PC-3 (cell line): ENCODE measurements at regions of chr19 and their contacts with region 1.

Region 1: DNA sequence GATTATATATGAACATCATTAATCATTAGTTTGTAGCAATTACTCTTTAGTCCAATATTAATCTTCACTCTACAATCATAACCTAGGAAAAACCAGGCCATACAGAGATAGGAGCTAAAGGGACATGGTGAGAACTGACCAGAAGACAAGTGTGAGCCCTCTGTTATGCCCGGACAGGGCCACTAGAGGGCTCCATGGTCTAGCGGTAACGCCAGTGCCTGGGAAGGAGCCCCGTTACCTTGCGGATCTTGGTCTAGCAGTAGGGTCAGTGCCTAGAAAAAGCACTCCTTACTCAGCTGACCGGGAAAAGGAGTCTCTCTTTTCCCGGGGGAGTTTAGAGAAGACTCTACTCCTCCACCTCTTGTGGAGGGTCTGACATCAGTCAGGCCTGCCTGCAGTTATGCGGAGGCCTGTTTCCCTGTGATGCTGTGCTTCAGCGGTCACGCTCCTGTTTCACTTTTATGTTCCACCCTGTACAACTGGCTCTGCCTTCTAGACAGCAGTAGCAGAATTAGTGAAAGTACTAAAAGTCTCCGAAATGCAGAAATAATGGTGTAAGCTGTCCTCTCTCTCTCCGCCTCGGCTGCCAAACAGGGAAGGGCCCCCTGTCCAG is 13.8 kb downstream of the OR7D4 start:
- DNase-seq: peak; percentile 89
- ATAC-seq: peak; percentile 94
- H3K4me3 ChIP-seq: peak overlapping the region; percentile 54
- H3K27ac ChIP-seq: no peak overlapping the region
- H3K4me1 ChIP-seq: no peaks in the 10 kb centered on the region
- H3K27me3 ChIP-seq: no peaks in the 10 kb centered on the region
- CTCF ChIP-seq: peak; percentile 84

Region 2: DNA sequence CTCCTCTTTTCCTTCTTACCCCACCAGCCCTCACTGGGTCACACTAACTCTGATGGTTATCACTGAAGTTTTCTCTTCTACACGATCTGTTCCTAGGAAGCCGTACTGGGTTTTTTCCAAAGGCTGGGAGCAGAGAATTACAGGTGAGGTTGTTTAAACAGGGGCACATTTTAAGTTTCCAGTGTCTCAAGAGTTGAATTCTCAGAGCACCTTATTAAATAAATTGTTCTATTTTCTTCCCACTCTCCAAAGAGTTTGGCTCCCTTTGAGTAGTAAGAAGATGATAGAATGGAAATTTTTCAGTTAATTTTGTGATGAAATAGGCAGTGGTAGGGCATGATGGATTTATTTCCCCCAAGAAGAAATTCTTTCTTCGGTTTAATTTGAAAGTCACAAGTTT is 13.9 kb after region 1 on chr19 and contains the start of gene OR7D4:
- CTCF ChIA-PET with region 1: no interaction called
- POLR2A ChIA-PET with region 1: no interaction called
- intact Hi-C with region 1: no loop called
- DNase-seq: no peak
- ATAC-seq: no peak
- H3K4me3 ChIP-seq: no peak within 1 kb of the TSS
- H3K27ac ChIP-seq: no peak within 1 kb of the TSS
- H3K4me1 ChIP-seq: no peaks in the 10 kb centered on the region
- H3K27me3 ChIP-seq: no peaks in the 10 kb centered on the region
- CTCF ChIP-seq: no peak
- total RNA-seq, gene OR7D4: not detected in 2 replicates

Region 3: DNA sequence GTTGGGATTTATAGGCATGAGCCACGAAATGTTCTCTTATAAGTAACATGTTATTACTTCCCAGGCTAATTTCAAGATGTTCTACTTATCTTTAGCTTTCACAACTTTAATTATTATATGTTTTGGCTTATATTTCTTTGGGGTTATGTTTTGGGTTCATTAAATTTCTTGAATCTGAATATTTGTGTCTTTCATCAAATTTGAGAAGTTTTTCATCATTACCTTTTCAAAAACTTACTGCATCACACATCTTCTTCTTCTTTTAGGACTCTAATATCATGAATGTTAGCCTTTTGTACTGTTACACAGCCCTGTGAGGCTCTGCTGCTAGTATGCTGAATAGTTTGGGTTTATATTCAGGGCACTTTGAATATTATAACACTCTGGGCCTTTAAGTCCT is 239.4 kb after region 1 on chr19:
- CTCF ChIA-PET with region 1: interaction called, 21 read pairs
- POLR2A ChIA-PET with region 1: no interaction called
- intact Hi-C with region 1: no loop called
- DNase-seq: no peak
- ATAC-seq: no peak
- H3K4me3 ChIP-seq: no peak overlapping the region; the same call in 1 of the 2 replicates
- H3K27ac ChIP-seq: no peak overlapping the region
- H3K4me1 ChIP-seq: no peaks in the 10 kb centered on the region
- H3K27me3 ChIP-seq: no peaks in the 10 kb centered on the region
- CTCF ChIP-seq: no peak